Left colon (tissue), 2 donors: ENCODE measurements at regions of chr14 and their contacts with region 1.

Region 1: GRCh38 chr14:104650057-104650981 is 39.1 kb upstream of the INF2 start:
- DNase-seq: peak in 1 of 2 donors; percentile 73
- ATAC-seq: peak; percentile 84

Region 2: DNA sequence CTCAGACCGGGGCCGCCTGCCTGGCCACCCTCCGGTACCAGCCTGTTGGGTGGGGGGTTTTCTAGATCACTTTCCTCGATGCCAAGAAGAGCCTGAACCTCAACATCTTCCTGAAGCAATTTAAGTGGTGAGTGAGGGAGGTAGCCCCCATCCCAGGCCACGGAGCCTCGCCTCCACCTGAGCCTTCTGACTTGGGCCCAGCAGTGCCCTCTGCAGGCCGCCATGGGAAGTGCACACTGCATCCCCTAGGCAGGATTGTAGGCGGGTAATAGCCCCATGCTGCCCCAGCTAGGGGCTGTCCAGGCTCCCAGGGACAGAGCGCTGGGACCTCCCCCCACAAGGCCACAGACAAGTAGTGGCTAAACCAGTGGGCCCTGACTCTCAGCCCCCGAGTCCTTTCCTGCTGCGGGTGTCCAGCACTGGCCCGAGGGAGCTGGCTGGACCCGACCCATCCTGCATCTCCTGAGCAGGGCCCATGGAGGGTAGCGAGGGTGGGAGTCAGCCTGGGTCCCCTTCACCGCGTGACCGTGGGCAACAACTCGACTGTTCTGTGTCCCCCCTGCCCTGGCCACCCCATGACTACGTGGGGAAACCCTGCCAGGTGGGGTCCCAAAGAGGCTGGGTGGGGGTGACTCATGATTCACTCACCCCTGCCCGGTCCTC is 58.4 kb after region 1 on chr14:
- intact Hi-C with region 1: loop called (anchors 5 kb)
- DNase-seq: peak in 1 of 2 donors; percentile 79
- ATAC-seq: peak; percentile 65

Region 3: DNA sequence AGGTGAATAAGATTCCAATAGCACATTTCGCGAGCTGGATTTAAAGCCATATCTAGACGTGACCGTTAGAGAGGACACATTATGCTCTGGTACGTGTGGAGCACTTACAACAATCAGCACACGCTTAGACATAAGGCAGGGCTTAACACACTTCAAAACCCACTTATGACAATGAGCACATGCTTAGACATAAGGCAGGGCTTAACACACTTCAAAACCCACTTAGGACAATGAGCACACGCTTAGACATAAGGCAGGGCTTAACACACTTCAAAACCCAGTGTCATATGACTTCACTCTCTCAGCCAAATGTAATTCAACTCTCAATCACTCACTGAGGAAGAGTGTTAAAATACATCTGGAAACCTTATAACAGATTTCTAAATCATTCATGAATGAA is 263.1 kb after region 1 on chr14:
- intact Hi-C with region 1: no loop called
- DNase-seq: no peak
- ATAC-seq: no peak